ENCODE measurements at regions of chr11 and their contacts with region 1.

Region 1: DNA sequence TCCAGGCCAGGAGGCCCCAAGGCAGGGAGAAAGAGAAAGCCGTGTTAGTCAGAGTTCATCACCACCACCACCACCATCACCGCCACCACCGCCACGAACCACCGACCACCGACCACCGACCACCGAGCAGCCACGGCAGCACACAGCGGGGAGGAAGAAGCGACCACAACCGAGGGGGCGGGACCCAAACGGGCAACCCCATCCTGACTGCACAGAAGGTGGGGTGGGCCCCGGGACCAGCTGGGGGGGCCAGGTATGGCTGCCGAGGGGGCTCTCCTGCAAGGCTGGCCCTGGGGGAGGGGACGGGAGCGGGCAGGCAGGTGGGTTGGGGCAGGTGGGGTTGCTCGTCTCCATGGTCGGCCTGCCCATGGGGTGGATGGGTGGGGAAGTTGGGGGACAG is 34.2 kb downstream of the SYT7 start:
- DNase-seq: no peak
- H3K4me3 ChIP-seq: no peak overlapping the region
- H3K27ac ChIP-seq: no peak overlapping the region
- H3K4me1 ChIP-seq: no peaks in the 10 kb centered on the region
- H3K27me3 ChIP-seq: no peaks in the 10 kb centered on the region
- CTCF ChIP-seq: no peak
- POLR2A ChIP-seq: no peak

Region 2: GRCh38 chr11:61532139-61533038 is 14.3 kb before region 1 on chr11:
- CTCF ChIA-PET with region 1: interaction called, 10 read pairs
- POLR2A ChIA-PET with region 1: no interaction called
- dilution Hi-C with region 1: no loop called
- intact Hi-C with region 1: no loop called
- DNase-seq: peak; percentile 25
- H3K4me3 ChIP-seq: no peak overlapping the region
- H3K27ac ChIP-seq: no peak overlapping the region
- H3K4me1 ChIP-seq: no peaks in the 10 kb centered on the region
- H3K27me3 ChIP-seq: no peaks in the 10 kb centered on the region
- CTCF ChIP-seq: peak; percentile 76 to 88
- POLR2A ChIP-seq: no peak

Measured in endothelial cell of umbilical vein (primary cell).